ENCODE measurements at regions of chr7 and their contacts with region 1.

Region 1: DNA sequence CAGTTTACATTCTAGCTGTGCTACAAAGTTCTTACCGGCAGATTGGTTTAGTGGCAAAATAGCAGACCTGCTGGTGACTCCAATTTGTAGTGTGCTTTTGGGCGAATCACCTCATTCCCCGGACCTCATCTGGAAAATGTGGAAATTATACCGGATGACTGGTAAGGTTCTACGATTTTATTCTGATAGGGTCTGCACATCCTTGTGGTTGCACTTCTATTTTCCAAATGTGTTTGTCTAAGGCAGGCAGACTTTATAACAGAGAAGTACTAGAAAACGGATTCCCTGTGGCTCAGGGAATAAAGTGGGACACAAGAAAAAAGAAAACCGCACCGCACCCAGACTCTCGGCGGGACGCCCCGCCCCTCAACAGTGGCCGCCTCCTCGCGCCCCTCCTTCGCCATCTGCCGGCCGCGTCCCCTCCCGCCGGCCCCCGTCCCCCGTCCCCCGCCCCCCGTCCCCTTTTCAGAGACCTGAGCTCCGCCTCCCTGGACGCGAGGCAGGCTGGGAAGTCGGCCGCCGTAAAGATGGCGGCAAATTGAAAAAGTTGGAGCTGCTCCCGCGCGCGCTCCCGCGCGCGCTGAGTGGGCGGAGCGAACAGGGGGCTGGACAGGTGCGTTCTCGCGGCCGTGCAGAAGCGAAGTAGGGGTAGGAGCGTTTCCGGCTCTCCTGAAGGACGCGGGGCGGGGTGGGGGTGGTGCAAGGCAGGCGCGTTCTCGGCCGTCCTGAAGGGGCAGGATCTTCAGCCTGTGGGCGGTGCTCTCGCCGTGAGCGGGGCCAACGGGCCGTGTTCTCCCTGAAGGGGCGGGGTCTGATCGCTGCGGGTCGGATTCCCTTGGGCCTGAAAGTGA is 531 bp upstream of the CCM2 start:
- DNase-seq: peak; percentile 100

Region 2: GRCh38 chr7:44885394-44886317 is 113.8 kb before region 1 on chr7 and contains the start of gene PURB:
- intact Hi-C with region 1: loop called (anchors 5 kb)
- DNase-seq: peak; percentile 96
- total RNA-seq, gene PURB: 19.1 TPM

Region 3: GRCh38 chr7:45089341-45089891 is 89.9 kb after region 1 on chr7:
- intact Hi-C with region 1: no loop called
- DNase-seq: peak; percentile 71

Region 4: GRCh38 chr7:45111298-45112223 is 112.1 kb after region 1 on chr7 and contains the start of gene TBRG4:
- intact Hi-C with region 1: loop called (anchors 1 kb)
- DNase-seq: peak; percentile 97
- total RNA-seq, gene TBRG4: 61.4 TPM